IMR-90 (cell line): ENCODE measurements at regions of chr11 and their contacts with region 1.

Region 1: DNA sequence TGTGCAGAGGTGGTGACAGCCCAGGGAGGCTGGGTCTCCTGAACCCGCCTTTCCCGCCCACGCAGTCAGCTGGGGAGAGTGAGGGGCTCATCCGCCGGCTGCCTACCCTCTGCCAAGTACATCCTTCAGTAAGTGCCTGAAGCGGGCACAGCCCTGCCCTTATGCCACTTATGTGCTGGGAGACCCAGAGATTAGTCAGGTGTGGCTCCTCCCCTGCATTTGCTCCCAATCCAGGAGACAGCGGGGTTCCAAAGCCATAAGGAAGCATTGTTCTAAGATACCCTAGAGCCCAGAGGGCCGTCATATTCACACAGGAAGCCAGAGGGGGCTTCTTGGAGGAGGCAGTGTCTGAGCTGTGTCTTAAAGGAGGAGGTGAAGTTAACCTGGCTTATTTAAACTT is 5.8 kb upstream of the PPP6R3 start:
- DNase-seq: no peak
- ATAC-seq: no peak
- H3K4me3 ChIP-seq: no peak overlapping the region
- H3K27ac ChIP-seq: no peak overlapping the region
- H3K4me1 ChIP-seq: no peaks in the 10 kb centered on the region
- H3K27me3 ChIP-seq: peaks cover 3% of the 10 kb centered on the region; the same call in 1 of the 2 replicates
- CTCF ChIP-seq: no peak
- POLR2A ChIP-seq: no peak
- RAD21 ChIP-seq: no peak

Region 2: GRCh38 chr11:68266121-68266891 is 188.5 kb before region 1 on chr11:
- CTCF ChIA-PET with region 1: no interaction called
- POLR2A ChIA-PET with region 1: no interaction called
- dilution Hi-C with region 1: no loop called
- in situ Hi-C with region 1: loop called (anchors 5 kb)
- intact Hi-C with region 1: no loop called
- DNase-seq: no peak
- ATAC-seq: no peak
- H3K4me3 ChIP-seq: no peak overlapping the region
- H3K27ac ChIP-seq: no peak overlapping the region
- H3K4me1 ChIP-seq: peaks cover 10% of the 10 kb centered on the region
- H3K27me3 ChIP-seq: no peaks in the 10 kb centered on the region
- CTCF ChIP-seq: no peak
- POLR2A ChIP-seq: no peak
- RAD21 ChIP-seq: no peak